SK-N-SH (cell line): ENCODE measurements at regions of chr11 and their contacts with region 1.

Region 1: DNA sequence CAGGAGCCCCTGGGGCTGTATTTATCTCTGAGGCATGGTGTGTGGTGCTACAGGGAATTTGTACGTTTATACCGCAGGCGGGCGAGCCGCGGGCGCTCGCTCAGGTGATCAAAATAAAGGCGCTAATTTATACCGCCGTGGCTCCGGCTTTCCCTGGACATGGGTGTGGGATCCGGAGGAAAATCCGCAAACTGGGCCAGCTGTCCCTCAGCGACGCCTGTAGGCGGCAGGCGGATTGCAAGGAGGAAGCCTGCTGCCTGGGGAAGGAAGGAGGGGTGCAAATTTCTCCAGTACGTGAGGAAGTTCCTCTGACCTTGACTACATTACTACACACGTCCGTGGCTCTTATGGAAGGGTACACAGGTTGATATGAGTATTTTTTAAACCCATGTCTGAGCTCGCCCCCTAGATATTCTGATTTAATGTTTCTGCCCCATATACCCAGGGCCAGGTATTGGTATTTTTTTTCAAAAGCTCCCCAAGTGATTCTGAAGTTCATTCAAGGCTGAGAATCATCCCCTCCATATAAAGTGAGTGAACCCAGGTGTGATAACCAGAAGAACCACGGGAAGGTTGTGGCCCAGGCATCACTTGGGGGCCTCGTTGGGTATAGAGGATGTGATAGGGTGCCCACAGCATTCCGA is 2.8 kb downstream of the MYOD1 start:
- DNase-seq: peak; percentile 70
- H3K4me3 ChIP-seq: no peak overlapping the region
- H3K27ac ChIP-seq: no peak overlapping the region
- H3K4me1 ChIP-seq: peaks cover 0 to 6% of the 10 kb centered on the region in 2 experiments; a peak in 1 of 4 replicates
- H3K27me3 ChIP-seq: peaks cover 54% of the 10 kb centered on the region
- CTCF ChIP-seq: peak; percentile 46; the same call in 1 of the 2 replicates
- EP300 ChIP-seq: no peak
- RAD21 ChIP-seq: peak; percentile 43

Region 2: DNA sequence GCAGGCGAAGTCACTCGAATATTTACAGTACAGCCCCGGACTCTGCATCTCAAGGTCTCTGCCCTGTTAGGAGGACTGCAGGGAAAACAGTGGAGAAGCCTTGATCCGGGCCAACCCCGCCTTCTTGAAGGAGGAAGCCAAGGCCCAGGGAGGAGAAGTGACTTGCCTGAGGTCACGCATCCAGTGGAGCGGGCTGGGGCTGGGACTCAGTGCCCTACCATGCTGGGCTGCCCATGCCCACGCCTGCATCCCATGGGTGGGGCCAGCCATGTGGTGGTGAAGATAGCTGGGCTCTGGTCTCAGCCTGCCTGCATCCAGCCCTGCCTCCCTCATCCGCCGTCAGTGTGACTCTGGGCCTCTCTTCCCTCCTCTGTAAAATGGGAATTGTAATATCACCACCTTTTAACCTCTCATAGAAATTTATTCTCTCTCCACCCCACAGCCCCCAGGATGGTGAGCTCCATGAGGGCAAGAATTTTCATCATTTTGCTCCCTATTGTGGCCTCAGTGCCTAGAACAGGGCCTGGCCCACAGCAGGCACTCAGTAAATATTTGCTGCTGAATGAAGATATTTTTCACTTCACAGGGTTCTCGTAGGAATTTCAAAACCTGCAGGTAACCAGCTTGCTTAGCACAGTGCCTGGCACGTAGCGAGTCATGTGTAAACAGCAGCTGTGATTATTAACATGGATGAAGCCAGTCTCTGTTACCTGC is 117.8 kb before region 1 on chr11:
- CTCF ChIA-PET with region 1: interaction called, 38 read pairs
- POLR2A ChIA-PET with region 1: no interaction called
- DNase-seq: no peak
- H3K4me3 ChIP-seq: no peak overlapping the region
- H3K27ac ChIP-seq: no peak overlapping the region
- H3K4me1 ChIP-seq: peaks cover 0 to 9% of the 10 kb centered on the region in 2 experiments; a peak in 1 of 4 replicates
- H3K27me3 ChIP-seq: no peaks in the 10 kb centered on the region
- CTCF ChIP-seq: no peak
- EP300 ChIP-seq: no peak
- RAD21 ChIP-seq: no peak

Region 3: GRCh38 chr11:17711836-17712235 is 10.3 kb before region 1 on chr11:
- CTCF ChIA-PET with region 1: interaction called, 34 read pairs
- POLR2A ChIA-PET with region 1: interaction called, 3 read pairs
- DNase-seq: no peak
- H3K4me3 ChIP-seq: no peak overlapping the region
- H3K27ac ChIP-seq: no peak overlapping the region
- H3K4me1 ChIP-seq: no peaks in the 10 kb centered on the region
- H3K27me3 ChIP-seq: peaks cover 18% of the 10 kb centered on the region
- CTCF ChIP-seq: no peak
- EP300 ChIP-seq: no peak
- RAD21 ChIP-seq: no peak

Region 4: DNA sequence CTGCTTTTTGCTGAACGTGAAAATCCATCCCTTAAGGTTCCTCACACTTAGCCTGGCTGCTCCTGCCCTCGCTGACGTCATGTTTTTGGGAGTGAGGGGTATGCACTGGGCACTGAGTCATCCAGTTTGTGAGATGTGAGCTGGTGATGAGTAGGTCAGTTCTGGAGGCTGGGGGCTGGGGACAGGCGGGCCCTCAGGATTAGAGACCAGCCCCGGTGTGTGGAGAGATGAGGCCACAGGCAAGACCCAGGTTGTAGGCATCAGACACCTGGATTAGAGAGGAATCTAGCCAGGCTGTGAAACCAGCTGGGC is 21.6 kb after region 1 on chr11:
- CTCF ChIA-PET with region 1: no interaction called
- POLR2A ChIA-PET with region 1: no interaction called
- DNase-seq: no peak
- H3K4me3 ChIP-seq: no peak overlapping the region
- H3K27ac ChIP-seq: no peak overlapping the region
- H3K4me1 ChIP-seq: peaks cover 0 to under 1% of the 10 kb centered on the region in 2 experiments; a peak in 1 of 4 replicates
- H3K27me3 ChIP-seq: no peaks in the 10 kb centered on the region
- CTCF ChIP-seq: no peak
- EP300 ChIP-seq: no peak
- RAD21 ChIP-seq: no peak